ENCODE measurements at regions of chr1 and their contacts with region 1.

Region 1: DNA sequence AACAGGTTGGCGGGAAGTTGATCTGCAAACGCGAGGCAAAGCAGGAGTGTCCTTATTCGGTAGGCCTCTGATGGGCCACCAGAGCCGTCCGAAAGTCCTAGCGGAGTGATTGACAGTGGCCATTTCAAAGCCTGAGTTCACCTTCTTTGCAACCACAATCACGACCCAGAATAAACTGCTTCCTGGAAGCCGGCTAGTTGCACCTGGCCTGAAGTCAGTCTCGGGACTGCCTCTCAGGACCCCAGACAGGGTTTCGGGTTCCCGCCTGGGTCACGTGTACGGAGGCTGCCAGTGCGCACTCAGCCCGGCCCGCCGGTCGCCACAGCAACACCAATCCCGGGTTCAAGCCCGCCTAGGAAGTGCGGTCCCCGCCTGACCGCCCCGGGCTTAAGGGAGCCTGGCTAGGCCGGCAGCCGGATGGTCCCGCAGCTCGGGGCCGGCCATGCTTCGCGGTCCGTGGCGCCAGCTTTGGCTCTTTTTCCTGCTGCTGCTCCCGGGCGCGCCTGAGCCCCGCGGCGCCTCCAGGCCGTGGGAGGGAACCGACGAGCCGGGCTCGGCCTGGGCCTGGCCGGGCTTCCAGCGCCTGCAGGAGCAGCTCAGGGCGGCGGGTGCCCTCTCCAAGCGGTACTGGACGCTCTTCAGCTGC is at the start of gene TOR3A:
- DNase-seq: peak; percentile 94 to 97
- ATAC-seq: peak; percentile 94 to 96 (median 94)
- H3K4me3 ChIP-seq: peak within 1 kb of the TSS; percentile 93
- H3K27ac ChIP-seq: peak within 1 kb of the TSS; percentile 97
- H3K4me1 ChIP-seq: peaks cover 20% of the 10 kb centered on the region
- H3K27me3 ChIP-seq: no peaks in the 10 kb centered on the region
- CTCF ChIP-seq: no peak
- total RNA-seq, gene TOR3A: 16.5 to 36.0 (median 24.9) TPM

Region 2: DNA sequence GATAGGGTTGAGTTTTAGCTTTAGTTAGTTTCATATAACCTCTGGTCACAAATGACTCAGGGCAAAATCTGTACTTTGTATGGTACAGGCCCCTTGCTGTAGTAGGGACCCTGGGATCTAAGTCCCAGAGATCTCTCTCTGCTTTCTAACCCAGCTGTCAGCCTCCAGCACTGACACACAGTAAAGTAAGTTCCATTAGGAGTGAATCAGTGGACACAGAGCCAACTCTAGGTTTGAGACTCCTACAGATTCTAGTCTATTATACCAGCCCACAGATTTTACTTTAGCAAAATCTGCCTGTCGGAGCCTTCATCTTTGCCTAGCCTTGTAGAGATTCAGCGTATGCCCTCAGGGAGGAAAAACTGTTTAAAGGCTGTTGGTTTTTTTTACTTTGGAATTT is 263.4 kb before region 1 on chr1:
- intact Hi-C with region 1: no loop called
- DNase-seq: no peak
- ATAC-seq: no peak
- H3K4me3 ChIP-seq: no peak overlapping the region
- H3K27ac ChIP-seq: no peak overlapping the region
- H3K4me1 ChIP-seq: no peaks in the 10 kb centered on the region
- H3K27me3 ChIP-seq: no peaks in the 10 kb centered on the region
- CTCF ChIP-seq: no peak

Region 3: DNA sequence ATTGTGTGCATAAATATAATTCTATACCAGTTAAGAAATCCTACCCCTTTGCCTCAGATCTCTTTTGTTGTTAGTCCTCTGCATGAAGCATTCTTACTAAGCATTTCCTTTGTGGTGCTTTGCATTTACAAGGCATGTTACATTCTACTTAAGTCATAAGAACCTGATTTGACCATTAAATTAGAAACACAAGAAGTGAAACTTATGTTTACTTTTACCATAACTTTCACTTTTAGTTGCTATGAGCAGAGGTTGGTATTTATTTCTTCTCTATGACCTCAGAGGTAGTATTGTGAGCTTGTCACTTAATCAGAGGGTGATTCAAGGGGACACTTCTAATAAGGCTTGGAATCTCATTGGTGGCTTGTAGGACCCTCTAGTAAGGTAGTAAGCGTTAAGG is 47.1 kb before region 1 on chr1:
- intact Hi-C with region 1: loop called in 1 of 2 experiments (anchors 5 kb)
- DNase-seq: no peak
- ATAC-seq: peak in 1 of 4 donors; percentile 31
- H3K4me3 ChIP-seq: no peak overlapping the region
- H3K27ac ChIP-seq: peak overlapping the region; percentile 9
- H3K4me1 ChIP-seq: peaks cover 67% of the 10 kb centered on the region
- H3K27me3 ChIP-seq: no peaks in the 10 kb centered on the region
- CTCF ChIP-seq: no peak

Region 4: DNA sequence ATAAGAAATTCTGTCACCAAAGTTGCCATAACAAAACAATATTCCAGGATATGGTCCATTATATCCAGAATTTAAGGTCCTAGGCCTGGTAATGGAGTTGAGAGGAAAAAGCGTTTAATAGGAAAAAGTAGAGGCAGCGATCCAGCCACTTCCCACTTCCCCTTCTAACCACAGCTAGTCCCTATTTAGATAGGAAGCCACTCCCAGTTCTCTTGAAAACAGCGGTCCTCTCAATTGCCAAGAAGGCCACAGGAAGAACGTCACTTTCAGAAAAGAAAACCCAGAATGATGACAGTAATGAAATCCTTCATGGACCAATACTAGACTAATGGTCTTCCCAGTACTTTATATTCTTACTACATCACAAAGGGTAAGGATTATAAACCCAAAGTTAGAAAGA is 109.1 kb after region 1 on chr1:
- intact Hi-C with region 1: loop called (anchors 5 kb)
- DNase-seq: no peak
- ATAC-seq: peak in 1 of 4 donors; percentile 42
- H3K4me3 ChIP-seq: no peak overlapping the region
- H3K27ac ChIP-seq: peak overlapping the region; percentile 18
- H3K4me1 ChIP-seq: peaks cover 32% of the 10 kb centered on the region
- H3K27me3 ChIP-seq: no peaks in the 10 kb centered on the region
- CTCF ChIP-seq: no peak

Region 5: DNA sequence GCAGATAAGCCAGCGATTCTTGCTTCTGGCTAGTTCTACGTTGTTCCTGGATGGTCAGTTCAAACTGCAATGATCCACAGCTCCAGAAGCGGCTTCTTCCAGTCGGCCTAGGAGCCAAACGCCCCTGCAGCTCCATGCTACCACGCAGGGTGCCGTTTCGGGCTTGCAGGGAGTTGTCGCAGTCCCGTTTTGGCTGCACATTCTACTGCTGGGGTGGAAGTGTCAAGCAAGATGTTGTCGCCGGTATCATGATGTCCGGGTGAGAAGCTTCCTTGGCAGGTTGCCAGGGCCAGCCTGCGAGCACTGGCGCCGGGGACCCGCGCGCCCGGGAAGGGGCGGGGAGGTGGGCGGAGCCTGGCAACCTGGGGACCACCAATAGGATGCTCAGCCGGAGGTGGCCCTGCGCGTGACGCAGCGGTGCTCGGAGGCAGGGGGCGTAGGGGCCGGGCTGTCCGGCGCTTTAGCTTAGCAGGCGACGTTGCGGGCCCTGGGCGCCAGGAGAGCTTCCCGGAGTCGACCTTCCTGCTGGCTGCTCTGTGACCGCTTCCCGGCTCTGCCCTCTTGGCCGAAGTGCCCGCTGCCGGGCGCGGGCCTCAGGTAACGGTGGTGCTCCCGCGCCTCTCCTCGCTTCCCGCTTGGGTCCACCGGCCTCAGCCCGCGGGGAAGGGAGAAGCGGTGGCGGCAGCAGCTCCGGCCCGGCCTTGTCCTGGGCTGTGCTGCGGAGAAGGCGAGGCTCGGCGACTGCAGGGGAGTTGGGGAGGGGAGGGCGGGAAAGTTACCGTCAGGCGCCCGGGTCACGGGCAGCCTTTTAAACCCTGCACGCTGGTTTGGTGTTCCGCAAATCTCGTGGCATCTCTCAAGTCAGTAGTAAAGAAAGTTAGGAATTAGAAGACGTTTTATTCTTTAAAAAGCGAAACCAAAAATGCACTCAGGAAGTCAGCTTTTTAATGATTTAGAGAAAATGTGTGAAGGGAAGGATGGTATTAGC is 211.8 kb after region 1 on chr1 and contains the start of gene SOAT1:
- intact Hi-C with region 1: loop called in 1 of 2 experiments (anchors 5 kb)
- DNase-seq: peak; percentile 97 to 98
- ATAC-seq: peak; percentile 98 to 99 (median 99)
- H3K4me3 ChIP-seq: peak within 1 kb of the TSS; percentile 87
- H3K27ac ChIP-seq: peak within 1 kb of the TSS; percentile 82
- H3K4me1 ChIP-seq: peaks cover 9% of the 10 kb centered on the region
- H3K27me3 ChIP-seq: no peaks in the 10 kb centered on the region
- CTCF ChIP-seq: no peak
- total RNA-seq, gene SOAT1: 7.6 to 21.0 (median 11.1) TPM

Region 6: GRCh38 chr1:179365320-179366092 is 283.7 kb after region 1 on chr1 and contains the start of gene AXDND1:
- intact Hi-C with region 1: loop called (anchors 2 kb)
- DNase-seq: peak; percentile 84 to 91
- ATAC-seq: peak; percentile 88 to 95 (median 92)
- H3K4me3 ChIP-seq: peak within 1 kb of the TSS; percentile 73
- H3K27ac ChIP-seq: peak within 1 kb of the TSS; percentile 72
- H3K4me1 ChIP-seq: no peaks in the 10 kb centered on the region
- H3K27me3 ChIP-seq: no peaks in the 10 kb centered on the region
- CTCF ChIP-seq: peak; percentile 24
- total RNA-seq, gene AXDND1: not detected